PC-3 (cell line): ENCODE measurements at regions of chr12 and their contacts with region 1.

Region 1: GRCh38 chr12:88153959-88154358 is 11.9 kb downstream of the TMTC3 start:
- DNase-seq: peak; percentile 65
- ATAC-seq: no peak
- H3K4me3 ChIP-seq: no peak overlapping the region
- H3K27ac ChIP-seq: no peak overlapping the region
- H3K4me1 ChIP-seq: no peaks in the 10 kb centered on the region
- H3K27me3 ChIP-seq: no peaks in the 10 kb centered on the region
- CTCF ChIP-seq: peak; percentile 50

Region 2: GRCh38 chr12:88241862-88242570 is 88.1 kb after region 1 on chr12:
- CTCF ChIA-PET with region 1: no interaction called
- POLR2A ChIA-PET with region 1: no interaction called
- intact Hi-C with region 1: loop called (anchors 10 kb)
- DNase-seq: peak; percentile 98
- ATAC-seq: peak; percentile 81
- H3K4me3 ChIP-seq: no peak overlapping the region
- H3K27ac ChIP-seq: peak overlapping the region; percentile 78
- H3K4me1 ChIP-seq: peaks cover 38% of the 10 kb centered on the region
- H3K27me3 ChIP-seq: no peaks in the 10 kb centered on the region
- CTCF ChIP-seq: no peak

Region 3: GRCh38 chr12:88393017-88393767 is 239.2 kb after region 1 on chr12:
- CTCF ChIA-PET with region 1: no interaction called
- POLR2A ChIA-PET with region 1: no interaction called
- intact Hi-C with region 1: loop called (anchors 5 kb)
- DNase-seq: peak; percentile 55
- ATAC-seq: peak; percentile 29; the same call in 1 of the 2 replicates
- H3K4me3 ChIP-seq: no peak overlapping the region
- H3K27ac ChIP-seq: no peak overlapping the region
- H3K4me1 ChIP-seq: 0 out of 2 replicates have a peak, but pooled peaks cover 4% of the 10 kb centered on the region
- H3K27me3 ChIP-seq: no peaks in the 10 kb centered on the region
- CTCF ChIP-seq: peak; percentile 75

Region 4: GRCh38 chr12:88433997-88434703 is 280.2 kb after region 1 on chr12:
- CTCF ChIA-PET with region 1: no interaction called
- POLR2A ChIA-PET with region 1: no interaction called
- intact Hi-C with region 1: no loop called
- DNase-seq: peak; percentile 32
- ATAC-seq: peak; percentile 75
- H3K4me3 ChIP-seq: no peak overlapping the region
- H3K27ac ChIP-seq: peak overlapping the region; percentile 38
- H3K4me1 ChIP-seq: peaks cover 13% of the 10 kb centered on the region; the same call in 1 of the 2 replicates
- H3K27me3 ChIP-seq: no peaks in the 10 kb centered on the region
- CTCF ChIP-seq: no peak

Region 5: GRCh38 chr12:88993651-88994050 is 839.7 kb after region 1 on chr12:
- CTCF ChIA-PET with region 1: no interaction called
- POLR2A ChIA-PET with region 1: no interaction called
- intact Hi-C with region 1: loop called (anchors 1 kb)
- DNase-seq: peak; percentile 80
- ATAC-seq: peak; percentile 77
- H3K4me3 ChIP-seq: no peak overlapping the region
- H3K27ac ChIP-seq: no peak overlapping the region
- H3K4me1 ChIP-seq: peaks cover 11% of the 10 kb centered on the region
- H3K27me3 ChIP-seq: no peaks in the 10 kb centered on the region
- CTCF ChIP-seq: peak; percentile 87